ENCODE measurements at regions of chr22 and their contacts with region 1.

Region 1: DNA sequence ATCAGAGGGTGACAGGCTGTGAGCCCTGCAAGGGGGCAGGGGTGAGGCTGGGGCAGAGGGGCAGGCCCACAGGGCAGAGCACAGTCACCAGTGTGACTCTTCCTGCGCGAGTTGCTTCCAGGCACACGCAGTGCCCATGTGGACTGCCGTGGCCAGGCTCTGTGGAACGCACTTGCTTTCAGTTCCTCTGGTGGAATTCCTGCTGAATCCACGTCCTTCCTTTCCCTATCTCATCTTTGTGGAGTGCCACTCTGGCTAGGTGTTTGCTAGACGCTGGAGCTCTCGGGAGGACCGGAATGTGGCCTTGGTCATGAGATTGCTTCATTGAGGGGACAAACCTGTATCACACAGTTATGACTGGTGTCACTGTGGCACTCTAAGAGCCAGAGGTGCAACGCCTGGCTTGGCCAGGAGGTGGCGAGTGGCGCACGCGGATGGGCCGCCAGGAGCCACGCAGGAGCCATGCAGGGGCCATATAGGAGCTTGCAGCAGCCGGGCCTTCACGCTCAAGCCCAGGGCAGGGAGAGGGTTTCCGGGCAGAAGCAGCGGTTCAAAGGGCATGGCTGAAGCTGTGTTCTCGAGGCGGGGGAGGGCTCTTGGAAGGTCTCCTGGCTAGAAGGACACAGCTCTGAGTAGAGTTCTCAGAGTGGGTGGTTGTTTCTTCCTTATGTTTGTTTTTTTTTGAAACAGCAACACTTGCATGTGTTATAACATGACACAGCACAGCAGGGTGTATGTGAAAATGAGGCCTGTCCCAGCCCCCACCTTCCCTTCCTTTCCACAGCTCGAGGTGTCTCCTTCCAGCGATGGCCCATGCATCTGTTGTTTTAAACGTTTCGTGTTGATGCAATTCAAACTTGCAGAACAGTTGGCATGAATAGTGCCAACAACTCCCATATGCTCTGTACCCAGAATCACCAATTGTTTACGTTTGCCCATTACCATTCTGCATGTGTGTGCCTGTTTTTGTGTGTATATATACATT is 36.2 kb downstream of the TBC1D22A start:
- DNase-seq: peak; percentile 70 to 94
- H3K4me3 ChIP-seq: no peak overlapping the region
- H3K27ac ChIP-seq: no peak overlapping the region
- H3K4me1 ChIP-seq: no peaks in the 10 kb centered on the region; a peak in 2 of 7 replicates
- H3K27me3 ChIP-seq: no peaks in the 10 kb centered on the region
- CTCF ChIP-seq: peak; percentile 92 to 96 (median 96)
- EP300 ChIP-seq: no peak
- POLR2A ChIP-seq: no peak
- RAD21 ChIP-seq: peak; percentile 81 to 86

Region 2: GRCh38 chr22:46762238-46763050 is 36.2 kb before region 1 on chr22 and contains the start of gene TBC1D22A:
- CTCF ChIA-PET with region 1: interaction called, 35 read pairs
- POLR2A ChIA-PET with region 1: interaction called, 10 read pairs
- DNase-seq: peak; percentile 63 to 94
- H3K4me3 ChIP-seq: peak within 1 kb of the TSS; percentile 85 to 98 (median 92)
- H3K27ac ChIP-seq: peak within 1 kb of the TSS; percentile 90
- H3K4me1 ChIP-seq: peaks cover 0 to 4% (median 0%) of the 10 kb centered on the region in 4 experiments; a peak in 4 of 7 replicates
- H3K27me3 ChIP-seq: no peaks in the 10 kb centered on the region
- CTCF ChIP-seq: no peak
- EP300 ChIP-seq: peak in 1 of 2 experiments; percentile 83; a peak in 1 of 3 replicates
- POLR2A ChIP-seq: peak; percentile 93 to 96
- RAD21 ChIP-seq: no peak
- total RNA-seq, gene TBC1D22A: 18.4 and 19.0 TPM in 2 replicates

Region 3: DNA sequence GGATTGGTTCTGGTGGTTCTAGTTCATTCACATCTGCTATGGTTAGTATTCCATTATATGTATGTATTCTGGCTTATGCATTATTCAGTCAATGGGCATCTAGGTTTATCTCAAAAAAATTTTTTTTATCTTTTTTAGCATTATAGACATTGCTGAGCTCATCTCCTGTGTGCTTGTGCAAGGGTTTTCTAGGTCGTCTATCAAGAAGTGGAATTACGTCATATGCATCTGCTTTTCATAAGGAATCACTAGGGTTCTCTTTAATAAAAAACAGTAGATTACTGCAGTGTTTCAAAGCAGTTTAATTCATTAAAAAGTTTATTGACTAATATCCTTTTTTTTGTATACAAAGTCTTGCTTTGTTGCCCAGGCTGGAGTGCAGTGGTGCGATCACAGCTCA is 14.9 kb before region 1 on chr22:
- CTCF ChIA-PET with region 1: interaction called, 18 read pairs
- POLR2A ChIA-PET with region 1: no interaction called
- DNase-seq: no peak
- H3K4me3 ChIP-seq: no peak overlapping the region
- H3K27ac ChIP-seq: no peak overlapping the region
- H3K4me1 ChIP-seq: no peaks in the 10 kb centered on the region
- H3K27me3 ChIP-seq: no peaks in the 10 kb centered on the region; a peak in 1 of 7 replicates
- CTCF ChIP-seq: no peak
- EP300 ChIP-seq: no peak
- POLR2A ChIP-seq: no peak
- RAD21 ChIP-seq: no peak

Region 4: GRCh38 chr22:46827136-46827780 is 28.6 kb after region 1 on chr22:
- CTCF ChIA-PET with region 1: interaction called, 13 read pairs
- POLR2A ChIA-PET with region 1: no interaction called
- DNase-seq: peak; percentile 54 to 88
- H3K4me3 ChIP-seq: no peak overlapping the region
- H3K27ac ChIP-seq: no peak overlapping the region
- H3K4me1 ChIP-seq: peaks cover 0 to 8% (median 3%) of the 10 kb centered on the region in 4 experiments; a peak in 3 of 7 replicates
- H3K27me3 ChIP-seq: no peaks in the 10 kb centered on the region; a peak in 1 of 7 replicates
- CTCF ChIP-seq: peak; percentile 96 to 99 (median 99)
- EP300 ChIP-seq: no peak
- POLR2A ChIP-seq: no peak
- RAD21 ChIP-seq: peak; percentile 84 to 86

Region 5: DNA sequence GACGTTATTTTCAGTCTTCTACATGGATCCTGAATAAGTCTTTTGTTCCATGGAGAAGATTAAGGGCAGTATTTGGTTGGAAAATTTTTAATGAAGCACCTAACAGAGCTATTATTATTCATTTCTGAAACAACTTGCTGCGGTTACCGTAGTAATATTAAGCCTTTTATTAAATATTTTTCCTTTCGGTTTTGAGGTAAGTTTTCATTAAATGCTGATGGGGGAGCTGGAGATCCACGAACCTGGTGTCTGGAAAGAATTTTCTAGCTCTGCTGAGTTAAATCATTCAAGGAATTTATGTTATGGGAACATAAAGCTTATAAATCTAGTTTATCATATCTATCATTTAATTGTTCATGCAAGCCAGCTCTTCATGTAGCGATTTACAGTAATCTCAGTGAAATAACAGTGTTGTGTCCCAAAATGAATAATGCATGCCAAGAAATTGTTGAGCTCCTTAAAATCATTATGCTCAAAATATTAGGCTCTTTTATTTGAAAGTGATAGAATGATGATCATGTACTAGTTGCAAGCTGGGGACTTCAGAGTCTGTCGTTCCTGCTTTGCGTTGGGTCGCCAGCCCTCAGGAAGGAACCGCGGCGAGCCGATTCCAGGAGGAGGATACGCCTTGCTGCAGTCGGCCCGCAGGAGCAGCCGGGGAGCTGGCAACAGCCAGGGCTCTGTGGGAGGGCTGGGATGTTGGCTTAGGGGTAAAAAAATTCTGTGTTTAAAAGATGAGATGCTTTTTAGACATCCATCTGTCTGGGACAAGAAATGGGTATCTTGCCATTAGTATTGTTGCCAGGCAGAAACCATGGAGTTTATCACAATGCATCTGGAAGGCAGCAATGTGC is 46.9 kb after region 1 on chr22:
- CTCF ChIA-PET with region 1: interaction called, 16 read pairs
- POLR2A ChIA-PET with region 1: no interaction called
- DNase-seq: no peak
- H3K4me3 ChIP-seq: no peak overlapping the region
- H3K27ac ChIP-seq: no peak overlapping the region
- H3K4me1 ChIP-seq: peaks cover 0 to 3% (median 0%) of the 10 kb centered on the region in 4 experiments; a peak in 2 of 7 replicates
- H3K27me3 ChIP-seq: no peaks in the 10 kb centered on the region
- CTCF ChIP-seq: peak in 2 of 3 experiments; percentile 15 to 20; a peak in 2 of 4 replicates
- EP300 ChIP-seq: no peak
- POLR2A ChIP-seq: no peak
- RAD21 ChIP-seq: peak; percentile 58 to 62